Mammary epithelial cell (primary cell): ENCODE measurements at regions of chrX and their contacts with region 1.

Region 1: GRCh38 chrX:114075073-114075673 is 508.7 kb upstream of the HTR2C start:
- DNase-seq: no peak
- H3K4me3 ChIP-seq: no peak overlapping the region
- H3K27ac ChIP-seq: no peak overlapping the region
- H3K4me1 ChIP-seq: no peaks in the 10 kb centered on the region
- H3K27me3 ChIP-seq: no peaks in the 10 kb centered on the region
- CTCF ChIP-seq: peak; percentile 42 to 52

Region 2: GRCh38 chrX:113849408-113849807 is 225.8 kb before region 1 on chrX:
- CTCF ChIA-PET with region 1: no interaction called
- dilution Hi-C with region 1: no loop called
- in situ Hi-C with region 1: no loop called
- intact Hi-C with region 1: no loop called
- DNase-seq: no peak
- H3K4me3 ChIP-seq: no peak overlapping the region
- H3K27ac ChIP-seq: no peak overlapping the region
- H3K4me1 ChIP-seq: no peaks in the 10 kb centered on the region
- H3K27me3 ChIP-seq: no peaks in the 10 kb centered on the region
- CTCF ChIP-seq: no peak

Region 3: DNA sequence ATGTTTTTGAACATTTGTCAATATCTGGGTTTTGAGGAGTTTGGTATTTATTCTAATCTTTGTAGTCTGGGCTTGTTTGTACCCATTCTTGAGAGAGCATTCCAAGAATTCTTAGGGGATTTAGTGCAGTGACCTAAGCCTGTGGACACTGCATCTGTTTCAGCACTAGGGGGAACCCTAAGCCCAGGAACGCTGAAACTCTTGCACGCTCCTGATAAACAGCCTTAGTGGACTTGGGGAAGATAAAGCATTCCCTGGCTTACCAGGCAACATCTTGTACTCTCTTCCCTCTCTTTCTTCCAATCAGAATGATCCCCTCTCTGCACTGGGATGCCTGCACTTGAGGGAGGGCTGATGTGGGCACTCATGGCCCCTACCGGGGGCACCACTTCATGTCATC is 146.2 kb before region 1 on chrX:
- CTCF ChIA-PET with region 1: no interaction called
- dilution Hi-C with region 1: no loop called
- in situ Hi-C with region 1: no loop called
- intact Hi-C with region 1: loop called (anchors 1 kb)
- DNase-seq: peak; percentile 39
- H3K4me3 ChIP-seq: no peak overlapping the region
- H3K27ac ChIP-seq: no peak overlapping the region
- H3K4me1 ChIP-seq: no peaks in the 10 kb centered on the region
- H3K27me3 ChIP-seq: peaks cover 2% of the 10 kb centered on the region
- CTCF ChIP-seq: peak; percentile 57 to 80